ENCODE measurements at regions of chr4 and their contacts with region 1.

Region 1: GRCh38 chr4:75817901-75818300 is 84.4 kb downstream of the PPEF2 start:
- H3K4me3 Mint-ChIP-seq: no peak overlapping the region
- H3K27ac Mint-ChIP-seq: no peak overlapping the region
- H3K4me1 Mint-ChIP-seq: peaks cover 9% of the 10 kb centered on the region
- H3K27me3 Mint-ChIP-seq: no peaks in the 10 kb centered on the region

Region 2: GRCh38 chr4:75849461-75849860 is 31.6 kb after region 1 on chr4:
- intact Hi-C with region 1: loop called (anchors 5 kb)
- H3K4me3 Mint-ChIP-seq: no peak overlapping the region
- H3K27ac Mint-ChIP-seq: no peak overlapping the region
- H3K4me1 Mint-ChIP-seq: peaks cover 5% of the 10 kb centered on the region
- H3K27me3 Mint-ChIP-seq: no peaks in the 10 kb centered on the region

Measured in dendritic cell treated with granulocyte-macrophage colony-stimulating factor and Interleukin-4, amounts not matched to agents 40 ng/mL and 50 ng/mL, for 4 days (primary cell).